ENCODE measurements at regions of chr20 and their contacts with region 1.

Region 1: DNA sequence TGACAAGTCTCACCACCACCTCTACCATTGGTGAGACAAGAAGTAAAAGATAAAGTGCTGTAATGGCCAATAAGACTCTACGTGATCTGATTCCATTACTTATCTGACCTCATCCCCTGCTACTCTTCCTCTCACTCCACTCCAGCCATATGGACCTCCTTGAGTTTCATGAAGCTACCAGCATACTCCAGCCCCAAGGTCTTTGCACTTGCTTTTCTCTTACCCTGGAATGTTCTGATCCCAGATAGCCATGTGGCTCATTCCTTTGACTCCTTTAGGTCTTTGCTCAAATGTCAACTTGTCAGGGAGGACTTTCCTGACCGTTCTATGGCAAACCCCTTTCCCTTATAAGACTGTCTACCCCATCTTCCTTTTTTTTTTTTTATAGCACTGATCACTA is 42.4 kb upstream of the CHD6 start:
- DNase-seq: no peak
- ATAC-seq: no peak
- H3K4me3 ChIP-seq: no peak overlapping the region
- H3K4me3 Mint-ChIP-seq: no peak overlapping the region
- H3K27ac ChIP-seq: no peak overlapping the region
- H3K27ac Mint-ChIP-seq: no peak overlapping the region
- H3K4me1 ChIP-seq: no peaks in the 10 kb centered on the region
- H3K4me1 Mint-ChIP-seq: peaks cover 2% of the 10 kb centered on the region
- H3K27me3 ChIP-seq: peaks cover 0 to 4% of the 10 kb centered on the region in 2 experiments
- H3K27me3 Mint-ChIP-seq: peaks cover 36% of the 10 kb centered on the region
- CTCF ChIP-seq: no peak

Region 2: DNA sequence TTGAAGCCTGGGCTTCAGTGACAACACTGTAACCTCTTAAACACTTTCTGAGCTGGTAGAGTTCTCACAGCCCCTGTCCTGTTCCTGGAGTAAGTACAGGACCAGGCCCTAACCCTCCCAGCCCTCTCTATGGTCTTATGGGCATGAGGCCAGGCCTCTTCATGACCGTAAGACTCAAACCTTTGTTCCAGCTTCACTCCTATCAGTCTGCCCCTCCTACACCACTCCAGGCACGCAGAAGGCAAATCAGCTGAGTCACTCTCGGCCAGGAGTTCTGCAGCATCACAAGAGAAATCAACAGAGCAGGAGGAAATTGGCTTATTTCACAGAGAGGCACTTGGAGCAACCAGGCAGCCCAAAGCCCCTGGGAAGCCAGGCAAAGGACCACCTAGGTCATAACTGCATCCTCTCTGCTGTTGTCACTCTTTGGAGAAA is 17.1 kb before region 1 on chr20:
- CTCF ChIA-PET with region 1: no interaction called
- POLR2A ChIA-PET with region 1: no interaction called
- intact Hi-C with region 1: loop called in 1 of 2 experiments (anchors 1 kb)
- DNase-seq: no peak
- ATAC-seq: no peak
- H3K4me3 ChIP-seq: no peak overlapping the region
- H3K4me3 Mint-ChIP-seq: no peak overlapping the region
- H3K27ac ChIP-seq: no peak overlapping the region
- H3K27ac Mint-ChIP-seq: no peak overlapping the region
- H3K4me1 ChIP-seq: no peaks in the 10 kb centered on the region
- H3K4me1 Mint-ChIP-seq: no peaks in the 10 kb centered on the region
- H3K27me3 ChIP-seq: no peaks in the 10 kb centered on the region
- H3K27me3 Mint-ChIP-seq: peaks cover 23% of the 10 kb centered on the region
- CTCF ChIP-seq: no peak

Region 3: GRCh38 chr20:41955999-41956705 is 295.5 kb after region 1 on chr20:
- CTCF ChIA-PET with region 1: no interaction called
- POLR2A ChIA-PET with region 1: no interaction called
- intact Hi-C with region 1: no loop called
- DNase-seq: no peak
- ATAC-seq: no peak
- H3K4me3 ChIP-seq: no peak overlapping the region
- H3K4me3 Mint-ChIP-seq: no peak overlapping the region
- H3K27ac ChIP-seq: no peak overlapping the region
- H3K27ac Mint-ChIP-seq: no peak overlapping the region
- H3K4me1 ChIP-seq: no peaks in the 10 kb centered on the region
- H3K4me1 Mint-ChIP-seq: no peaks in the 10 kb centered on the region
- H3K27me3 ChIP-seq: no peaks in the 10 kb centered on the region
- H3K27me3 Mint-ChIP-seq: no peaks in the 10 kb centered on the region
- CTCF ChIP-seq: no peak

Measured in CD8-positive, alpha-beta T cell (primary cell).